Activated naive CD8-positive, alpha-beta T cell treated with anti-CD3 and anti-CD28 coated beads, Interleukin-2, amount 10 ng/mL, durations not matched to agents 7 days and 5 days (primary cell): ENCODE measurements at regions of chr6 and their contacts with region 1.

Region 1: GRCh38 chr6:26122793-26123674 is 35.8 kb downstream of the HFE start:
- DNase-seq: peak; percentile 76
- ATAC-seq: peak; percentile 58
- H3K4me3 Mint-ChIP-seq: peak overlapping the region; percentile 99
- H3K27ac Mint-ChIP-seq: peak overlapping the region; percentile 100
- H3K4me1 Mint-ChIP-seq: peaks cover 40% of the 10 kb centered on the region
- H3K27me3 Mint-ChIP-seq: no peaks in the 10 kb centered on the region

Region 2: GRCh38 chr6:26054857-26055669 is 68.0 kb before region 1 on chr6:
- POLR2A ChIA-PET with region 1: interaction called, 144 read pairs
- DNase-seq: peak; percentile 81
- ATAC-seq: peak; percentile 69
- H3K4me3 Mint-ChIP-seq: peak overlapping the region; percentile 96
- H3K27ac Mint-ChIP-seq: peak overlapping the region; percentile 100
- H3K4me1 Mint-ChIP-seq: peaks cover 32% of the 10 kb centered on the region
- H3K27me3 Mint-ChIP-seq: no peaks in the 10 kb centered on the region

Region 3: DNA sequence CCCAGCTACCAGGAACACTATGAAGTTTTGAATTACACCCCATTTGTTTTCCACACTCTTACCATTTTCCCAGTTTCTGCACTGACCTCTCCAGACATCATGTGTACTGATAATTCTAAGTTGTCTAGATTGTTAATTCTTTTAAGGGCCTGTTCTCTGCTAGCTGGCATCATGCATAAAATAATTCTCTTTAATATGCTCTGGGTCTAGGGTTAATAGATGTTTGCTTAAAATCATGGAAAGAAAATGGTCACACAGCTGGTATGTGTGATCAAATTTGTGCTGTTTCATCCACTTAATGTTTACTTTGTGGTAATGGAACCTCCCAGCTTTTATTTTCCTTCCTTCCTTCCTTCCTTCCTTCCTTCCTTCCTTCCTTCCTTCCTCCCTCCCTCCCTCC is 13.3 kb after region 1 on chr6:
- POLR2A ChIA-PET with region 1: interaction called, 33 read pairs
- DNase-seq: no peak
- ATAC-seq: no peak
- H3K4me3 Mint-ChIP-seq: no peak overlapping the region
- H3K27ac Mint-ChIP-seq: no peak overlapping the region
- H3K4me1 Mint-ChIP-seq: peaks cover 12% of the 10 kb centered on the region
- H3K27me3 Mint-ChIP-seq: no peaks in the 10 kb centered on the region

Region 4: GRCh38 chr6:26183581-26184366 is 60.7 kb after region 1 on chr6:
- POLR2A ChIA-PET with region 1: interaction called, 219 read pairs
- DNase-seq: peak; percentile 78
- ATAC-seq: peak; percentile 85
- H3K4me3 Mint-ChIP-seq: peak overlapping the region; percentile 96
- H3K27ac Mint-ChIP-seq: peak overlapping the region; percentile 99
- H3K4me1 Mint-ChIP-seq: peaks cover 48% of the 10 kb centered on the region
- H3K27me3 Mint-ChIP-seq: no peaks in the 10 kb centered on the region

Region 5: DNA sequence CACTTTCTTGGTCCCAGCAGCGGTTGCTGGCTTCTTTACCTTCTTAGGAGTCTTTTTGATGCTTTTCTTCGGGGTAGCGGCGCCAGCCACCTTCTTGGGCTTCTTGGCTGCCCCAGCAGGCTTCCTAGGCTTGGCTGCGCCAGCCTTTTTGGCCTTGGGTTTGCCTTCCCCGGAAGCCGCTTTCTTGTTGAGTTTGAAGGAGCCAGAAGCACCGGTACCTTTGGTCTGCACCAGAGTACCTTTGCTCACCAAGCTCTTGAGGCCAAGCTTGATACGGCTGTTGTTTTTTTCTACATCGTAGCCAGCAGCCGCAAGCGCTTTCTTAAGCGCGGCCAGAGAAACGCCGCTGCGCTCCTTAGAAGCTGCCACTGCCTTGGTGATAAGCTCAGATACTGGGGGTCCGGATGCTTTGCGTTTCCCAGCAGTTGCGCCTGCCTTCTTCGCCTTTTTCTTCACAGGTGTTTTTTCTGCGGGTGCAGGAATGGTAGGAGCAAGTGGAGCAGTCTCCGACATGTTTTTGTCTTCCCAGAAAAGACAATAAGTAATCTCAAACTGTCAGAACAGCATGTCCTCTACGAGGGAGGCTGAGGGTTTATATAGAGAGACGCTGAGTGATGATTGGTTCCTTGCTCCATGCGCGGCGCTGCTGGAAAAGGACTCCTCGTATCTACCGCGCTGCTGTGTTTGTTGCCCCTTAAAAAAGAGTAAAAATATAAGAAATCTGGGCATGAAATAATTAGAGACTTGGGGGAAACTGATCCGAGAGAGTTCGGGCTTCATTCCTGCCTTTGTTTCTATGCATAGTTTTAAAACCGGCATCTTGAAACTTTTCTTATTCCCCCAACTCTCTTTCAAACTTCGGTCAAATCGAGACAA is 111.6 kb after region 1 on chr6:
- POLR2A ChIA-PET with region 1: interaction called, 128 read pairs
- DNase-seq: peak; percentile 76
- ATAC-seq: peak; percentile 59
- H3K4me3 Mint-ChIP-seq: peak overlapping the region; percentile 94
- H3K27ac Mint-ChIP-seq: peak overlapping the region; percentile 100
- H3K4me1 Mint-ChIP-seq: peaks cover 36% of the 10 kb centered on the region
- H3K27me3 Mint-ChIP-seq: no peaks in the 10 kb centered on the region

Region 6: DNA sequence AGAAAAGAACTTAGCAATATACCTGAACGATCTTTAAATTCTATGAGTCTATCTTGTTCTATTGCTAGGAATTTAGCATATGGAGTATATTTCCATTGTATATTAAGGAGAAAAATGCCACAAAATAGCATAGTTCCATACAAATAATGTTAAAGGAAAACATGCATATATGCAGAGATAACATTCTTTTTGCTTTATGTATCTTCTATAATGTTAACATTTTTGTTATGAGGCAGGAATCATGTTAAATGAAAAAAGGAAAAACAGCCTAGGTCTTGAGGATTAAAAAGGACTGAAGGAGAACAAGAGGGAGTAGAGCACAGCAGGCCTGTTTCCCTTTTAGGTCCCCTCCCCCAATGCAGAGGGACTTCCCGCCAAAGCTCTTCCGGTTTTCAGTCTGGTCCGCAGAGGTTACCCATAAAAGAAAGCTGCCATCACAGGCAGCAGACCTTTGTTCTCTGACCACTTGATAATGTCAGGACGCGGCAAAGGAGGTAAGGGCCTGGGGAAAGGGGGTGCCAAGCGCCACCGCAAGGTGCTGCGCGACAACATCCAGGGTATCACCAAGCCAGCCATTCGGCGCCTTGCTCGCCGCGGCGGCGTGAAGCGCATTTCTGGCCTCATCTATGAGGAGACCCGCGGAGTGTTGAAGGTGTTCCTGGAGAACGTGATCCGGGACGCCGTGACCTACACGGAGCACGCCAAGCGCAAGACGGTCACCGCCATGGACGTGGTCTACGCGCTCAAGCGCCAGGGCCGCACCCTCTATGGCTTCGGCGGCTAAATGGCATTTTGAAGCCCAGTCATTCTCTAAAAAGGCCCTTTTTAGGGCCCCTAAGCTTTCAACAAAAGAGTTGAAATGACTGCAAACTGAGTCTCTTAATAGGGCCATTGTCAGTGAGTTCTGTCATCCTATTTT is 1016.1 kb after region 1 on chr6:
- POLR2A ChIA-PET with region 1: interaction called, 25 read pairs
- DNase-seq: peak; percentile 81
- ATAC-seq: peak; percentile 73
- H3K4me3 Mint-ChIP-seq: peak overlapping the region; percentile 95
- H3K27ac Mint-ChIP-seq: peak overlapping the region; percentile 98
- H3K4me1 Mint-ChIP-seq: peaks cover 39% of the 10 kb centered on the region
- H3K27me3 Mint-ChIP-seq: no peaks in the 10 kb centered on the region

Region 7: GRCh38 chr6:27871924-27872638 is 1749.0 kb after region 1 on chr6:
- POLR2A ChIA-PET with region 1: interaction called, 42 read pairs
- DNase-seq: peak; percentile 80
- ATAC-seq: peak; percentile 63
- H3K4me3 Mint-ChIP-seq: peak overlapping the region; percentile 92
- H3K27ac Mint-ChIP-seq: peak overlapping the region; percentile 93
- H3K4me1 Mint-ChIP-seq: peaks cover 44% of the 10 kb centered on the region
- H3K27me3 Mint-ChIP-seq: no peaks in the 10 kb centered on the region